WTC11 (cell line): ENCODE measurements at regions of chr3 and their contacts with region 1.

Region 1: DNA sequence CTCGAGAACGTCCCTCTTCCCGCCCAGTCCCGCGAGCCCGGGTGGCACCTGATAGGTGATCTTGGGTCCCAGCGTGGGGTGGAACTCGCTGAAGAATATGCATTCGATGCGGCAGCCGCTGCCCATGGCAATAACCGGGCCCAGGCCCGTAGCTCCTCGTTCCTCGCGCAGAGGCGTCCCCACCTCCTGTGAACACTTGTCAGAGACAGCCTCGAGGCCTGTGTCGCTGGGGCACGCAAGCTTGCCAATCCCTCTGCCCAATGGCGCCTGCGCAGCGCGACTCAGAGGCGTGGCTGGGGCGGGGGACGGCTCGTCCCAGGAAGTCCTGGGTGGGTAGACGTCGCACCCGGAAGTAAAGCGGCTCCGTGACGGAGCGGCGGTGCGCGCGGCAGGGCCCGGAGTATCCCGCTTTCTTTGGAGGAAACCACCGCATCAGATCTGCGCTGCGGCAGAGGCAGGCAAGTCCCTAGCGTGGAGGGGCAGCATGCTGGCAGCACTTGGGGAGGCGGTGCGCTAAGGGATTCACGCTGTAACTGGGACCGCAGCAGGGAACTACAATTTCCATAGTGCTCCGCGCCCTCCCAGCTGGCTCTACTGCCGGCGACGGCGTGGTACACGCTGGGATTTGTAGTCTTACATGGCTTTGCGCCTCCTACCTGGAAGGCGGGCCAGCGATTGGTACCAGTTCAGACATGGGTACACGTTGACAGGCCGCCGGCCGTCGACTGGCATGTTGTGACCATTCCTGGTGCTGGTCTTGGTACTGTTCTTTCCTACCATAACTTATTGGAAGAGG is at the starts of genes CYB561D2 and NPRL2:
- DNase-seq: peak; percentile 90
- ATAC-seq: peak; percentile 87
- H3K4me3 Mint-ChIP-seq: peak within 1 kb of the TSS; percentile 95
- H3K27ac Mint-ChIP-seq: peak within 1 kb of the TSS; percentile 93
- H3K4me1 Mint-ChIP-seq: peaks cover 18% of the 10 kb centered on the region
- H3K27me3 Mint-ChIP-seq: peaks cover 10% of the 10 kb centered on the region
- CTCF ChIP-seq: no peak
- total RNA-seq, gene CYB561D2: 9.8 to 12.0 TPM (median 11.3 TPM) in 3 replicates
- total RNA-seq, gene NPRL2: 20.6 to 26.6 TPM (median 23.9 TPM) in 3 replicates

Region 2: GRCh38 chr3:48388966-48389365 is 1961.8 kb before region 1 on chr3:
- CTCF ChIA-PET with region 1: no interaction called
- POLR2A ChIA-PET with region 1: no interaction called
- DNase-seq: no peak
- ATAC-seq: no peak
- H3K4me3 Mint-ChIP-seq: no peak overlapping the region
- H3K27ac Mint-ChIP-seq: no peak overlapping the region
- H3K4me1 Mint-ChIP-seq: no peaks in the 10 kb centered on the region
- H3K27me3 Mint-ChIP-seq: peaks cover 3% of the 10 kb centered on the region
- CTCF ChIP-seq: no peak

Region 3: DNA sequence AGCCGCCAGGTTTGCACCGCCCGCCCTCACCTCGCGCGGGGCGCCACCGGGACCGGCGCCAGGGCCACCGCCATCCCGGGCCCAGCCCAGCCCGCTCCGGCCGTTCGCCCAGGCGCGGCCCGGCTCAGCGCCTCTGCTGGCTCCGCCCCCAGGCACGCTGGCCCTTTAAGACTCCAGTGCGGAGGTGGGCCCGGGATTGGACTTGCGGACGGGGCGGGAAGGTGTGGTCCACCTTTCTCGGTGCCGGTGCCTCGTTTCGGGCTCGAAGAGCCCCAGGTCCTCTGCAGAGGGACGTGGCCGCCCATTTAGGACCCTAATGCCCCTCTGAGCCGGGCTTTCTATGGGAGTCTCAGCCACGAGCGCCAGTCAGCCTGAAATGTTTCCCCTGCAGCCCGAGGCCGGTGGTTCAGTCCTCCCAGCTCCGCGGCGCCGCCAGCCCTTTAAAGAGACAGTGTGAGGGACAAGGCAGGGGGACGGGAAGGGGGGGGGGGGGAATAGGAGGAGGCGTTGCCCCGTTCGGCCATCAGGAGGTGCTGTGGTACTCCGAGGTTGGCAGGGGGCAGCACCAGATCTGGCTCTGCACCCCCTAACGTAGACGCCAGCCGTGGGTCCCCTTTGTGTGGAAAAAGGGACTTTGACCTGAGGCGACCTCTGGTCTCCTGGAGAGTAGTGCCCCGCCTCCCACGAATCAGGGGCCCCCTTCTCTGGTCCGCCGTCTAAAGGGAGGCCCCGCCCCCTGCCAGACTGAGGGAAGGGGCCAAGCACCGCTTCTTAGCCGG is 29.2 kb before region 1 on chr3:
- CTCF ChIA-PET with region 1: interaction called, 12 read pairs
- POLR2A ChIA-PET with region 1: no interaction called
- DNase-seq: peak; percentile 90
- ATAC-seq: peak; percentile 71
- H3K4me3 Mint-ChIP-seq: peak overlapping the region; percentile 88
- H3K27ac Mint-ChIP-seq: peak overlapping the region; percentile 97
- H3K4me1 Mint-ChIP-seq: peaks cover 40% of the 10 kb centered on the region
- H3K27me3 Mint-ChIP-seq: no peaks in the 10 kb centered on the region
- CTCF ChIP-seq: peak; percentile 56; the same call in 1 of the 2 replicates

Region 4: DNA sequence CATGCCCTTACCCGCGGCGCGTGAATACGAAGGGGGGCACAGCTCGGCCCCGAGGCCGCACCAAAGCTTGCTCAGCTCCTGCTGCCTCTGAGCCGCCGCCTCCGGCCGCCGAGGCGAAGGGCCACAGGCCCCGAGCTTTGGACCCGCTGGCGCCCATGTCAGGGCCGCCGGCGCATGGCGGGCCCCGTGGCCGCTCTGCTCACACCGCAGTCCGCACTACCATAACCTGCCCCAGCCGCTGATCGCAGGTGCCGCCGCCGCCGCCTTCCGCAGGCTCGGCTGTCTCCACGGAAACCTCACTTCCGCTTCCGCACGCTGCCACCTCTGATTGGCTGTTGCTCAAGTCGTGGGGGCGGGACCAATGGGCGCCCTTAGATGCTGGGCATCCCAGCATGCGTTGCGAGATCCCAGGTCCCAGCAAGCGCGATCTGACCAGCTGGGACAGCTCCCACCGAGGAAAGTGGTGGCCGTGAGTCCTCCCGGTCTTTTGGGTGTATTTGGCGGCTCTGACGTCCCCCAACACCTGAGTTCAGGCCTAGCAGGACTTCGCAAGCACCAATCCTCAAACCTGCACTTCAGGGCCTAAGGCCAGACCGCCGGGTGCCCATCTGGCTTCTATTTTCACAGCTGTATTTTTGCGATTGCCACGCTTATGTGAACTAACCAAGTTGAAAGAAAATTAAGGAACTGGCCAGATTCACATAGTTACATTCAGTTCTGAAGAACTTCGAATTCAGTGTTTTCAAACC is 22.6 kb before region 1 on chr3 and contains the start of gene TUSC2:
- CTCF ChIA-PET with region 1: interaction called, 10 read pairs
- POLR2A ChIA-PET with region 1: no interaction called
- DNase-seq: peak; percentile 96
- ATAC-seq: peak; percentile 86
- H3K4me3 Mint-ChIP-seq: peak within 1 kb of the TSS; percentile 84
- H3K27ac Mint-ChIP-seq: peak within 1 kb of the TSS; percentile 74; the same call in 1 of the 2 replicates
- H3K4me1 Mint-ChIP-seq: peaks cover 25% of the 10 kb centered on the region
- H3K27me3 Mint-ChIP-seq: no peaks in the 10 kb centered on the region
- CTCF ChIP-seq: no peak
- total RNA-seq, gene TUSC2: 34.7 to 41.1 TPM (median 38.0 TPM) in 3 replicates

Region 5: DNA sequence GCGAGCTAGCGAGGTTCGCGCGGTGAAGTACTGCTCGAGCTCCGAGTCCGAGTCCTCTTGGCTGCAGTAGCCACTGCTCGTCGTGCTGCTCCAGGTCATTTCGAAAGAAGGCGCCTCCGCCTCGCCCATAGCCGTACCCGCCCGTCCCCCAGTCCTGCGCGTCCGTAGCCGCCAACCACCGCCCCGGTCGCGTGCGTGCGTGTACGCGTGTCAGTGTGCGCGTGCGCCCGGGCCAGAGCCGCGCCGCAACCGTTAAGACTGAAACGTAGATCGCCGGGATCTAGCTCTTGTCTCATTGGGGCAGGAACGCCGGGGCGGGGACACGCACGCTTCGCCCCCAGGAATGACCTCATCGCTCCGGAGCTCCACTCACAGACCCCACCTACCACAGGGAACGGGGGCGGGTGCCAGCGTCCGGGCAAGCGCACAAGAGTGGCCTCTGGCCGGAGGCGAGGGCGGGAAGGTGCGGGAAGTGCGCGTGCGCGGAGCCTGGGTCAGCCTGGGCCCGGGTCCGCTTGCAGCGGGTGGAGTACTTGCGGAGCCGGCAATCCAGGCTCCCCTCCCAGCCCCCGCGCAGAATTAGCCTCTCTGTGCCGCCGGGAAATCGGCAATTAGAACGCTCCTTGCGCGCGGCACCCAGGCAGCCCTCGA is 13.4 kb before region 1 on chr3:
- CTCF ChIA-PET with region 1: interaction called, 21 read pairs
- POLR2A ChIA-PET with region 1: interaction called, 9 read pairs
- DNase-seq: peak; percentile 99
- ATAC-seq: peak; percentile 91
- H3K4me3 Mint-ChIP-seq: peak overlapping the region; percentile 95
- H3K27ac Mint-ChIP-seq: peak overlapping the region; percentile 98
- H3K4me1 Mint-ChIP-seq: peaks cover 33% of the 10 kb centered on the region
- H3K27me3 Mint-ChIP-seq: peaks cover 43% of the 10 kb centered on the region
- CTCF ChIP-seq: no peak

Region 6: GRCh38 chr3:50365080-50365841 is 14.5 kb after region 1 on chr3:
- CTCF ChIA-PET with region 1: interaction called, 11 read pairs
- POLR2A ChIA-PET with region 1: no interaction called
- DNase-seq: peak; percentile 95
- ATAC-seq: peak; percentile 90
- H3K4me3 Mint-ChIP-seq: peak overlapping the region; percentile 76
- H3K27ac Mint-ChIP-seq: peak overlapping the region; percentile 74; the same call in 1 of the 2 replicates
- H3K4me1 Mint-ChIP-seq: peaks cover 6% of the 10 kb centered on the region; the same call in 1 of the 2 replicates
- H3K27me3 Mint-ChIP-seq: peaks cover 27% of the 10 kb centered on the region
- CTCF ChIP-seq: no peak